Mammary epithelial cell (primary cell): ENCODE measurements at regions of chr12 and their contacts with region 1.

Region 1: GRCh38 chr12:52156736-52157565 is 34.9 kb downstream of the KRT80 start:
- DNase-seq: peak; percentile 80
- H3K4me3 ChIP-seq: no peak overlapping the region
- H3K27ac ChIP-seq: peak overlapping the region; percentile 96
- H3K4me1 ChIP-seq: peaks cover 46% of the 10 kb centered on the region
- H3K27me3 ChIP-seq: no peaks in the 10 kb centered on the region
- CTCF ChIP-seq: peak; percentile 90 to 98

Region 2: GRCh38 chr12:51984657-51985056 is 172.3 kb before region 1 on chr12:
- CTCF ChIA-PET with region 1: no interaction called
- dilution Hi-C with region 1: no loop called
- in situ Hi-C with region 1: no loop called
- intact Hi-C with region 1: no loop called
- DNase-seq: no peak
- H3K4me3 ChIP-seq: no peak overlapping the region
- H3K27ac ChIP-seq: no peak overlapping the region
- H3K4me1 ChIP-seq: no peaks in the 10 kb centered on the region
- H3K27me3 ChIP-seq: no peaks in the 10 kb centered on the region
- CTCF ChIP-seq: no peak

Region 3: DNA sequence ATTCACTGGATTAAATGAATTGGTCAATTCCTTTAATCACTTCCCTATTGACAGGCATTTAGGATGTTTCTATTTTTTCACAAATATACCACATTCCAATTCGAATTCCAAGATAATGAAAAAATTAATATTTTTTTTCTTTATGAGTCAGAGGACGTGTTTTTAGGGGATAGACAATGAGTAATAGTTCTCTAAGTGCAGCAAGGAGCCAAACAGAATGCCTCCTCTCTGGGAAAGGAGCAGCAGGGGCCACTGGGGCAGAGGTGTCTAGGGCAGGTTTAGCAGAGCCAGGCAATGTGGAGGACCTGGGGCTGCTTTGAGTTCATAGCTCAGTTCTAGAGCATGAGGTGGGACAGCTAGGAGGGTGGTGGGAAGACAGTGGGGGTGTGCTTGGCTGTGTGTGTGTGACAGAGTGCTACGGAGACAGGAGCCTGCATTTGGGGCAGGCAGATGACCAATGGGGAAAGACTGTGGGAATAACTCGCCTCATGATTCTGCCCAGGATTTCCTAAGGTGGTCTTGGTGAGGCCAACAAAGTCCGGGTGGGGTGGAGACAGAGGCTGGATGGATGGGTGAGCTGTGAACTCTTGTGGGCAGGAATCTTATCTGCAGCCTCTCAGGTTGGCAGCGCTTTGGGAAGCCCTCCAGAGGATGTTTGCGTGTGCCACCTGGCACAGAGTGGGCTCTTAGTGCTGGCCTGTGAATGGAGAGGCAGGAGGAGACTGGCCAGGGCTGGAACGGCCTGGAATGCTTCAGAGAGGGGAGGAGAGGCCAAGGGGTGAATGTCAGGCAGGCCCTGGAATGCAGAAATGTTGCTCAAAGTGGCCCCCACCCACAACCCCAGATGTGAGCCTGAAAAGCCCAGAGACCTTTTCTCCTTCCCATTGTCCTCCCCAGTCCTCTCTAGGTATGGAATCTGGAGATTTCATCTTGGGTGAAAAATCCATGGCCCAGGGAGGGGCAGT is 73.7 kb after region 1 on chr12:
- CTCF ChIA-PET with region 1: no interaction called
- dilution Hi-C with region 1: no loop called
- in situ Hi-C with region 1: no loop called
- intact Hi-C with region 1: loop called (anchors 2 kb)
- DNase-seq: peak; percentile 75
- H3K4me3 ChIP-seq: peak overlapping the region in 1 of 3 experiments; percentile 5
- H3K27ac ChIP-seq: peak overlapping the region; percentile 79
- H3K4me1 ChIP-seq: peaks cover 57% of the 10 kb centered on the region
- H3K27me3 ChIP-seq: no peaks in the 10 kb centered on the region
- CTCF ChIP-seq: no peak

Region 4: DNA sequence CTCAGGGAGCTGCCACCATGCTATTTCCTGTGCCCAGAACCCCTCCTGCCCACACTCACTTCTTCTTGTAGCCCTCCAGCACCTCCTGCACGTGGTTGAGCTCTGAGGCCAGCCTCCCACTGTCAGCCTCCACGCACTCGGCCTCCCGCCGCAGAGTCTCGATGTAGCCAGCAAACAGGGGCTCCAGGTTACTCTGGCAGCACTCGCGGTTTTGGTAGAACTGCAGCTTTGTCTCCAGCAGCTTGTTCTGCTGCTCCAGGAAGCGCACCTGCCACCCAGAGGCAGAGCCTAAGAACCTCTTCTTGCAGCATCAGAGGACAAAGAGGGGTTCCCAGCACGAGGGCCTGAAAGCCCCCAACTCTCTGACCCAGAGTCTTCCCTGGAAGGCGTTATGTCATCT is 162.1 kb after region 1 on chr12:
- CTCF ChIA-PET with region 1: interaction called, 3 read pairs
- dilution Hi-C with region 1: no loop called
- in situ Hi-C with region 1: no loop called
- intact Hi-C with region 1: loop called (anchors 2 kb)
- DNase-seq: no peak
- H3K4me3 ChIP-seq: no peak overlapping the region
- H3K27ac ChIP-seq: no peak overlapping the region
- H3K4me1 ChIP-seq: no peaks in the 10 kb centered on the region
- H3K27me3 ChIP-seq: no peaks in the 10 kb centered on the region
- CTCF ChIP-seq: peak in 1 of 2 donors; percentile 47

Region 5: GRCh38 chr12:52870351-52871290 is 713.7 kb after region 1 on chr12:
- CTCF ChIA-PET with region 1: no interaction called
- dilution Hi-C with region 1: no loop called
- in situ Hi-C with region 1: loop called in 1 of 2 experiments (anchors 5 kb)
- intact Hi-C with region 1: loop called (anchors 1 kb)
- DNase-seq: peak; percentile 52
- H3K4me3 ChIP-seq: no peak overlapping the region
- H3K27ac ChIP-seq: peak overlapping the region; percentile 67
- H3K4me1 ChIP-seq: peaks cover 59% of the 10 kb centered on the region
- H3K27me3 ChIP-seq: no peaks in the 10 kb centered on the region
- CTCF ChIP-seq: peak; percentile 57 to 74